Heart left ventricle (tissue), 16 donors: ENCODE measurements at regions of chr12 and their contacts with region 1.

Region 1: GRCh38 chr12:47963340-47964040 is at the start of gene TMEM106C:
- DNase-seq: peak; percentile 89 to 97 (median 92)
- ATAC-seq: peak; percentile 88 to 97 (median 95)
- H3K4me3 ChIP-seq: peak within 1 kb of the TSS; percentile 59 to 91 (median 82)
- H3K27ac ChIP-seq: peak within 1 kb of the TSS in 8 of 12 donors; percentile 14 to 73 (median 56)
- H3K4me1 ChIP-seq: peaks cover 0 to 45% (median 18%) of the 10 kb centered on the region in 12 donors
- H3K27me3 ChIP-seq: no peaks in the 10 kb centered on the region
- CTCF ChIP-seq: peak; percentile 94 to 99 (median 98)
- POLR2A ChIP-seq: no peak
- total RNA-seq, gene TMEM106C: 39.3 to 66.6 (median 50.0) TPM

Region 2: DNA sequence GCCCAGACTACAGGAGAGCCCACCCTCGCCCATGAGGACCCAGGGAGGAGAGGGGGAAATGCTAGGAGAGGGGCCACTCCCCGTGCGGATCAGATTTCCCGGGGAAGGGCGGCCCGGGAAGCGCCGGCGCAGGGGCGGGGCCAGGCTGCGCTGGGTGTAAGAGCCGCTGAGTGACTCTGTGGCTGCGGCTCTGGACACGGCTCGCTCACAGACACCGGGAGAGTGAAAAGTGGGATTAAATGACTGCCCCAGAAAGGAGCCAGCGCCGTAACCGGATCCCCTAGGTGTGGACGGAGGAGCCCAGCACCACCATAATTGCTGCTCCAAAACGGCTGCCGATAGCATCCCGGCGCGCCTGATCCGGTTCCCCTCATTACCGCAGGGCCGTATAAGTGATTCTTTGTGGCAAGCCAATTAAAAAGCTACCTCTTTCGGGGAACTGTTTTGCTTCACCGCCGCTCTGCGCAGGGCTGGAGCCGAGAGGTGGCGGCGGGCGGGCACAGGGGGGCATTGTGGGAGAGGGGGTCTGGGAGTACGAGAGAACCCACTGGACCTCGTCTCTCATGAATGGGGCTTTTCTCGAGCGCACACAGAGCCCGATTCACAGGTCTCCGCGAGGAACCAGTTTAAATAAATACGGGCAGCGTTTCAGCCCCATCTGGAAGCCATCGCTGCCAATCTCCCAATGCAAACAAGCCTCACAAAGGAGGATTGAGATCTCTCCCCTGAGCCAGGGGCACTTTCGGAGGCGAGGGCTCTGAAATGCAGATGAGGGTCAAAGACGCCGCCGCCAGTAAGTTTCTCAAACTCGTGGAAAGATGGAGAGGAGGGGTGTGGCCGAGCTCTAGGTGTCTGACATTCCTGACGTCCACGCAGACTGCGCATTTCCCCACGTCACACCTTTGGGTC is 38.3 kb after region 1 on chr12:
- intact Hi-C with region 1: loop called in 2 of 10 experiments (anchors 5 kb)
- DNase-seq: peak in 4 of 5 donors; percentile 50 to 64 (median 56)
- ATAC-seq: peak; percentile 77 to 93 (median 85)
- H3K4me3 ChIP-seq: peak overlapping the region; percentile 6 to 65 (median 54)
- H3K27ac ChIP-seq: peak overlapping the region in 7 of 12 donors; percentile 11 to 65 (median 47)
- H3K4me1 ChIP-seq: peaks cover 3 to 47% (median 40%) of the 10 kb centered on the region in 12 donors
- H3K27me3 ChIP-seq: peaks cover 20 to 88% (median 41%) of the 10 kb centered on the region in 9 donors
- CTCF ChIP-seq: no peak
- POLR2A ChIP-seq: no peak

Region 3: GRCh38 chr12:48021485-48022179 is 58.1 kb after region 1 on chr12:
- intact Hi-C with region 1: loop called in 1 of 10 experiments (anchors 10 kb)
- DNase-seq: no peak
- ATAC-seq: peak in 3 of 4 donors; percentile 26 to 58 (median 41)
- H3K4me3 ChIP-seq: no peak overlapping the region
- H3K27ac ChIP-seq: no peak overlapping the region
- H3K4me1 ChIP-seq: peaks cover 0 to 30% (median 4%) of the 10 kb centered on the region in 12 donors
- H3K27me3 ChIP-seq: peaks cover 0 to 48% (median 0%) of the 10 kb centered on the region in 9 donors
- CTCF ChIP-seq: no peak
- POLR2A ChIP-seq: no peak

Region 4: GRCh38 chr12:48165094-48165981 is 201.8 kb after region 1 on chr12:
- intact Hi-C with region 1: loop called in 3 of 10 experiments (anchors 10 kb)
- DNase-seq: peak in 1 of 5 donors; percentile 26
- ATAC-seq: peak in 2 of 4 donors; percentile 44 to 64
- H3K4me3 ChIP-seq: no peak overlapping the region
- H3K27ac ChIP-seq: no peak overlapping the region
- H3K4me1 ChIP-seq: peaks cover 0 to 4% (median 0%) of the 10 kb centered on the region in 12 donors
- H3K27me3 ChIP-seq: peaks cover 0 to 9% (median 0%) of the 10 kb centered on the region in 9 donors
- CTCF ChIP-seq: peak; percentile 78 to 97 (median 92)
- POLR2A ChIP-seq: no peak

Region 5: DNA sequence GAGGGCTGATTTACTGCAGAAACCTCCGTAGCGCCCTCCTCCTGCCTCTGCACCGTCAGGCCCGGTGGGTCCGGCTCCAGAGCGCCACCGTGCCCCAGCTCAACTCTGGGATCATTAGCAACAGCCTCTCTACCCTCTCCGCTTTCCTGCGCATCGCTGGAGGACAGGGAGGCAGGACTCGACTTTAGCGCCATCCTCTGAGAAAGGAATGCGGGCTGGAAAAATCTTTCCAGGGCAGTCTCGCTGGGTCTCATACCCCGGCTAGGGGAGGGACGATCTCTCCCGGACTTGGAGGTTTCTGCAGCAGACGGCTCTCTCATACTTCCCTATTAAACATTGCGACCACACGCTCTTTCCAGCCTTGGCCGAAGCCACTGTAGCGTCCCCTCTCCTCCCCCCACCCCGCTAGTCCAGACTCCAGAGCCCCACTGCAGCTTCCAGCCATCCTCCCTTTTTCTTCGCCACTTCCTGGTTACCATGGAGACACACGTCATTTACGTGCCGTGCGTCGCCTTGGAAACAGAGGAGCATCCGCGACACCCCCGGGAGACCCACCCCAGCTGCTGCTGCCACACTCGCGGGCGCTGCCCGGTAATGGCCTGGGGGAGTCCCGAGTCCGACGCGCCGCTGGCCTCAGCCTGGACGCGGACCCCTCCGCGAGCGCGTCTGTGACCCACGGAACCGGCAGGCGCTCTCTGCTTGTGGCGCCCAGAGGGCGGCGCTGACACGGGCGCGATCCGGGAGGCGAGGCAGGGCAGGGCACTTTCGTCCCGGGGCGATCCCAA is 219.8 kb after region 1 on chr12 and contains the start of gene CCDC184:
- intact Hi-C with region 1: loop called in 1 of 10 experiments (anchors 5 kb)
- DNase-seq: peak; percentile 62 to 79 (median 76)
- ATAC-seq: peak; percentile 54 to 82 (median 80)
- H3K4me3 ChIP-seq: peak within 1 kb of the TSS; percentile 49 to 89 (median 70)
- H3K27ac ChIP-seq: peak within 1 kb of the TSS in 9 of 12 donors; percentile 1 to 72 (median 54)
- H3K4me1 ChIP-seq: peaks cover 0 to 28% (median 16%) of the 10 kb centered on the region in 12 donors
- H3K27me3 ChIP-seq: peaks cover 17 to 54% (median 31%) of the 10 kb centered on the region in 9 donors
- CTCF ChIP-seq: peak in 8 of 12 donors; percentile 7 to 65 (median 36)
- POLR2A ChIP-seq: peak in 1 of 2 donors; percentile 27
- total RNA-seq, gene CCDC184: 0.25 to 1.5 (median 0.54) TPM